Psoas muscle (tissue), 8 donors: ENCODE measurements at regions of chr9 and their contacts with region 1.

Region 1: DNA sequence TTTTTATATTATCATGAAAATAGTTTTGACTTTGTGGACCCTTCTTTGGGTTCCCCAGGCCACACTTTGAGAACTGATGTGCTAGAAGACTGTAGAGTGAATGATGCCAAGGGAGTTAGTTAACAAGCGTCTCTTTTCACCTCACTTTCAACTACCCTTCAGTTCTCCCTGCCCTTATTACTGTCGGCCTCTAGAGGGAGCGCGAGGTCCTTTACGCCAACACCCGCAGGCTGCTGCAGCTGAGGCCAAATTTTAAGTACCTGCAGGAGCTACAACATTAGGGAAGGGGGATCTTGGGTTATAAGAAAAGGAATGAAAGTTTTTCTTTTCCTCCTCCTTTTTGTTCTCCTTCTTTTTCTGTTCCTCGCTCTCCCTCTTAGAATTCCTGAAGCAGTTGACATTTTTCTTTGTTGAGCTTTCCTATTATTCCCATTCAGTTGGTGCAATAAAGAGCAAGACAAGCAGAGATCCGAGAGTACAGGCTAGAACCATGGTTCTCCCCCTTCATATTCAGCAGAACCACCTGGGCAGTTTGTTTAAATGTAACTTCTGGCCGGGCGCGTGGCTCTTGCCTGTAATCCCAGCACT is 84.0 kb downstream of the ZFAND5 start:
- DNase-seq: peak; percentile 63 to 81
- ATAC-seq: peak; percentile 81 to 96 (median 91)
- H3K4me3 ChIP-seq: no peak overlapping the region
- H3K27ac ChIP-seq: no peak overlapping the region
- H3K4me1 ChIP-seq: no peaks in the 10 kb centered on the region
- H3K27me3 ChIP-seq: no peaks in the 10 kb centered on the region
- CTCF ChIP-seq: peak; percentile 89

Region 2: GRCh38 chr9:72753266-72753893 is 472.4 kb after region 1 on chr9:
- intact Hi-C with region 1: loop called in 1 of 2 experiments (anchors 5 kb)
- DNase-seq: no peak
- ATAC-seq: no peak
- H3K4me3 ChIP-seq: no peak overlapping the region
- H3K27ac ChIP-seq: no peak overlapping the region
- H3K4me1 ChIP-seq: no peaks in the 10 kb centered on the region
- H3K27me3 ChIP-seq: no peaks in the 10 kb centered on the region
- CTCF ChIP-seq: peak; percentile 29

Region 3: DNA sequence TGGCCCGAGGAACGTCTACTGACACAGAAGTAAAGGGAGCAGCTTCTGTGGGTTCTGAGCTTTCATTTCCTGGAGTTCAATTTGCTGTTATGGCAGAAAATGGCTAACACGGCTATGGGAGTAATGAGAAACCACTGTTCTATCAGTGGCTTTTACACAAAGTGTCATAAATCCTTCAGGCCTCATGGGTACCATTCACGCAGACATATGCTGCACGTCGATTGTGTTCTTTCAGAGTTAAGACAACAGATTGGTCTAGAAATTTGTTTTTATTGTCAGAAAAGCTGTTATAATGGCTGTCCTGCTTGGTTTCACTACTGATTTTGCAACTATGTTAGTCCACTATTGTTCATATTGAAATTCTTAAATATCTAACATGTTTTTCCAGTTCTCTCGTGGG is 536.4 kb after region 1 on chr9:
- intact Hi-C with region 1: loop called (anchors 2 to 5 kb)
- DNase-seq: no peak
- ATAC-seq: no peak
- H3K4me3 ChIP-seq: no peak overlapping the region
- H3K27ac ChIP-seq: no peak overlapping the region
- H3K4me1 ChIP-seq: no peaks in the 10 kb centered on the region
- H3K27me3 ChIP-seq: no peaks in the 10 kb centered on the region
- CTCF ChIP-seq: no peak

Region 4: GRCh38 chr9:72827950-72828731 is 547.1 kb after region 1 on chr9:
- intact Hi-C with region 1: loop called in 1 of 2 experiments (anchors 5 kb)
- DNase-seq: no peak
- ATAC-seq: no peak
- H3K4me3 ChIP-seq: no peak overlapping the region
- H3K27ac ChIP-seq: no peak overlapping the region
- H3K4me1 ChIP-seq: no peaks in the 10 kb centered on the region
- H3K27me3 ChIP-seq: no peaks in the 10 kb centered on the region
- CTCF ChIP-seq: no peak